Activated B cell treated with CpG ODN at 0.5 μM for 24 hours (primary cell): ENCODE measurements at regions of chr13 and their contacts with region 1.

Region 1: GRCh38 chr13:43611281-43612273 is 175.2 kb downstream of the ENOX1 start:
- DNase-seq: no peak
- ATAC-seq: no peak
- H3K4me3 Mint-ChIP-seq: no peak overlapping the region
- H3K27ac Mint-ChIP-seq: no peak overlapping the region
- H3K4me1 Mint-ChIP-seq: no peaks in the 10 kb centered on the region
- H3K27me3 Mint-ChIP-seq: no peaks in the 10 kb centered on the region
- CTCF ChIP-seq: no peak

Region 2: GRCh38 chr13:43584751-43585150 is 26.8 kb before region 1 on chr13:
- CTCF ChIA-PET with region 1: no interaction called
- POLR2A ChIA-PET with region 1: interaction called, 10 read pairs
- intact Hi-C with region 1: no loop called
- DNase-seq: no peak
- ATAC-seq: no peak
- H3K4me3 Mint-ChIP-seq: no peak overlapping the region
- H3K27ac Mint-ChIP-seq: no peak overlapping the region
- H3K4me1 Mint-ChIP-seq: no peaks in the 10 kb centered on the region
- H3K27me3 Mint-ChIP-seq: peaks cover 3% of the 10 kb centered on the region
- CTCF ChIP-seq: no peak

Region 3: GRCh38 chr13:43648733-43649132 is 37.2 kb after region 1 on chr13:
- CTCF ChIA-PET with region 1: no interaction called
- POLR2A ChIA-PET with region 1: no interaction called
- intact Hi-C with region 1: no loop called
- DNase-seq: no peak
- ATAC-seq: no peak
- H3K4me3 Mint-ChIP-seq: no peak overlapping the region
- H3K27ac Mint-ChIP-seq: no peak overlapping the region
- H3K4me1 Mint-ChIP-seq: no peaks in the 10 kb centered on the region
- H3K27me3 Mint-ChIP-seq: peaks cover 5% of the 10 kb centered on the region
- CTCF ChIP-seq: no peak

Region 4: GRCh38 chr13:43664700-43665191 is 53.2 kb after region 1 on chr13:
- CTCF ChIA-PET with region 1: no interaction called
- POLR2A ChIA-PET with region 1: no interaction called
- intact Hi-C with region 1: no loop called
- DNase-seq: no peak
- ATAC-seq: no peak
- H3K4me3 Mint-ChIP-seq: no peak overlapping the region
- H3K27ac Mint-ChIP-seq: no peak overlapping the region
- H3K4me1 Mint-ChIP-seq: peaks cover 3% of the 10 kb centered on the region
- H3K27me3 Mint-ChIP-seq: no peaks in the 10 kb centered on the region
- CTCF ChIP-seq: no peak

Region 5: GRCh38 chr13:43981091-43981490 is 369.5 kb after region 1 on chr13:
- CTCF ChIA-PET with region 1: no interaction called
- POLR2A ChIA-PET with region 1: no interaction called
- intact Hi-C with region 1: no loop called
- DNase-seq: no peak
- ATAC-seq: no peak
- H3K4me3 Mint-ChIP-seq: no peak overlapping the region
- H3K27ac Mint-ChIP-seq: no peak overlapping the region
- H3K4me1 Mint-ChIP-seq: no peaks in the 10 kb centered on the region
- H3K27me3 Mint-ChIP-seq: peaks cover 20% of the 10 kb centered on the region
- CTCF ChIP-seq: no peak